WTC11 (cell line): ENCODE measurements at regions of chr3 and their contacts with region 1.

Region 1: DNA sequence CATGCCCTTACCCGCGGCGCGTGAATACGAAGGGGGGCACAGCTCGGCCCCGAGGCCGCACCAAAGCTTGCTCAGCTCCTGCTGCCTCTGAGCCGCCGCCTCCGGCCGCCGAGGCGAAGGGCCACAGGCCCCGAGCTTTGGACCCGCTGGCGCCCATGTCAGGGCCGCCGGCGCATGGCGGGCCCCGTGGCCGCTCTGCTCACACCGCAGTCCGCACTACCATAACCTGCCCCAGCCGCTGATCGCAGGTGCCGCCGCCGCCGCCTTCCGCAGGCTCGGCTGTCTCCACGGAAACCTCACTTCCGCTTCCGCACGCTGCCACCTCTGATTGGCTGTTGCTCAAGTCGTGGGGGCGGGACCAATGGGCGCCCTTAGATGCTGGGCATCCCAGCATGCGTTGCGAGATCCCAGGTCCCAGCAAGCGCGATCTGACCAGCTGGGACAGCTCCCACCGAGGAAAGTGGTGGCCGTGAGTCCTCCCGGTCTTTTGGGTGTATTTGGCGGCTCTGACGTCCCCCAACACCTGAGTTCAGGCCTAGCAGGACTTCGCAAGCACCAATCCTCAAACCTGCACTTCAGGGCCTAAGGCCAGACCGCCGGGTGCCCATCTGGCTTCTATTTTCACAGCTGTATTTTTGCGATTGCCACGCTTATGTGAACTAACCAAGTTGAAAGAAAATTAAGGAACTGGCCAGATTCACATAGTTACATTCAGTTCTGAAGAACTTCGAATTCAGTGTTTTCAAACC is at the start of gene TUSC2:
- DNase-seq: peak; percentile 96
- ATAC-seq: peak; percentile 86
- H3K4me3 Mint-ChIP-seq: peak within 1 kb of the TSS; percentile 84
- H3K27ac Mint-ChIP-seq: peak within 1 kb of the TSS; percentile 74; the same call in 1 of the 2 replicates
- H3K4me1 Mint-ChIP-seq: peaks cover 25% of the 10 kb centered on the region
- H3K27me3 Mint-ChIP-seq: no peaks in the 10 kb centered on the region
- CTCF ChIP-seq: no peak
- total RNA-seq, gene TUSC2: 34.7 to 41.1 TPM (median 38.0 TPM) in 3 replicates

Region 2: GRCh38 chr3:50298836-50299637 is 29.1 kb before region 1 on chr3 and contains the starts of genes HYAL3 and NAA80:
- CTCF ChIA-PET with region 1: interaction called, 95 read pairs
- POLR2A ChIA-PET with region 1: interaction called, 3 read pairs
- DNase-seq: peak; percentile 100
- ATAC-seq: peak; percentile 88
- H3K4me3 Mint-ChIP-seq: peak within 1 kb of the TSS; percentile 97
- H3K27ac Mint-ChIP-seq: peak within 1 kb of the TSS; percentile 98
- H3K4me1 Mint-ChIP-seq: peaks cover 22% of the 10 kb centered on the region
- H3K27me3 Mint-ChIP-seq: no peaks in the 10 kb centered on the region; the same call in 1 of the 2 replicates
- CTCF ChIP-seq: no peak; the same call in 1 of the 2 replicates
- total RNA-seq, gene HYAL3: 2.9 to 3.8 TPM (median 3.2 TPM) in 3 replicates
- total RNA-seq, gene NAA80: 13.7 to 17.3 TPM (median 13.7 TPM) in 3 replicates